CD4-positive, alpha-beta memory T cell (primary cell): ENCODE measurements at regions of chr11 and their contacts with region 1.

Region 1: DNA sequence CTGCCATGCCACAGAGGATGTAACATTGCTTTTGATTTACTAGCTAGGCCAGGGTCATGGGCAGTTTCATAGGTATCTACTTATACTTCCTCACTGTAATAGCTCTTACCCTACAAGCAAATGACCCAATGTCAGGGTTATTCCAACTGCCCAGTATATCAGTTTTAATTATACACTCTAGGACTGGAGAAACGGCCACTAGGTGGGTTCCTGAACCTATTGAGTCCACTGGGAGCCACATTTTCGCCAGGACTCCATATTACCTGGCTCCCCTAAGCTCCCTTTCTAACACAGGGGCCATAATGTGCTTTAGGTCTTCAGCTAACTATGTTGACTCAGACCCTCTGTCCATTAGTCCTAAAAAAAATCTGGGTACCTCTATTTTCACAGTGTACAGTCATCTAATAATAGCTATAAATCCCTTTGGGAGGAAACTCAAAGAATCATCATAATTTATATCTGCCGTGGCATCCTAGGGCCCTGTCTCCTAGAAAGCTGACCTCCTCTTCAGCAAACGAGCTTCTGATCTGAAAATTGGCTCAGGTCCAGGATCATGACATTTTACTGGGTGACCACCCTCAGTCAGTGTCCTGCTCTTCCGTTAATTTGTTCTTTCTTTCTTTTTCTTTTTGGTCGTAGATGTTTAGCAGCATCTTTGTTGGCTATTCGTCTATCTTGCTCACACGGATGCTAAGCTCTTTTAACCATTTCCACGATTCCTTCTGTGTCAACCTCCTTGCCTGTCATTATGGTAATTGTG is 244.3 kb downstream of the FAM76B start:
- DNase-seq: no peak
- H3K4me3 ChIP-seq: no peak overlapping the region
- H3K4me3 Mint-ChIP-seq: no peak overlapping the region
- H3K27ac ChIP-seq: no peak overlapping the region
- H3K27ac Mint-ChIP-seq: no peak overlapping the region
- H3K4me1 ChIP-seq: peaks cover 15% of the 10 kb centered on the region
- H3K4me1 Mint-ChIP-seq: peaks cover 3 to 13% (median 10%) of the 10 kb centered on the region in 4 donors
- H3K27me3 ChIP-seq: no peaks in the 10 kb centered on the region
- H3K27me3 Mint-ChIP-seq: no peaks in the 10 kb centered on the region

Region 2: DNA sequence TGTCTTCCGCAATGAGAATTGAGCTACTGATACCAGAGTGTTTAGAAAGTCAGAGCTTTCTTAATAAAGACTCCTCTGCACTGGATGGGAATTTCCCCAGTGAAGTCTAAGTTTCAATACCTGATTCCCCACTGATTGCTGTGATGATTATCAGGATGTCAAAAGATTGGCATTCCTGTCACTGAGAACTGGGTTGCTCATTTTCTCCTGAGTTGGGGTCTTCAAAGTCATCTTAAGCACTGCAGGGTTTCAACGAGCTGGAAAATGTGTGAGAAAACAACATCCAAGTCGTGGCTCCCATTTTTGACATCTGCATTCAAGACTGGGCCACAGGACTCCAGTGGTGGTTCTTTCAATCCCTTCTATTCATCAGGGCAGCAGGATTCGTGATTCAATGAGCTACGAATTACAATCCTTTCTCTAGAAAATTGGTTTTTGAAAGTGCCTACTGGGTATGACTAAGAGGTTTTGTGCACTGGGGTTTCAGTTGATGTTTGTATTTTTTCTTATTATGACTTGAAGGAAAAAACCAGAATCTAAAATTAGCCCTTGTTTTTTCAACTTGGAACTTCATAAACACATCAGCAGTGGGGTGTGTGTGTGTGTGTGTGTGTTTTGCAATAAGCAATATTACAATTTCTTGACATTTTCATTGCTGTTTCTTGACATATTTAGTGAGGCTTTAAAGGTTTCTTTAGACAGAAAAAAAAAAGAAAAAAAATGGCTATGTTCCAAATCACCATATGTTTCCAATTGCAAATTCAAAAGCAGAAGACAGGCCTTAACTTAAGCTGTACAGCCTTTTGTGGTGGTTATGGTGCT is 11.3 kb after region 1 on chr11:
- CTCF ChIA-PET with region 1: interaction called, 14 read pairs
- POLR2A ChIA-PET with region 1: no interaction called
- intact Hi-C with region 1: no loop called
- DNase-seq: no peak
- H3K4me3 ChIP-seq: no peak overlapping the region
- H3K4me3 Mint-ChIP-seq: no peak overlapping the region
- H3K27ac ChIP-seq: no peak overlapping the region
- H3K27ac Mint-ChIP-seq: no peak overlapping the region
- H3K4me1 ChIP-seq: no peaks in the 10 kb centered on the region
- H3K4me1 Mint-ChIP-seq: peaks cover 0 to 10% (median 2%) of the 10 kb centered on the region in 4 donors
- H3K27me3 ChIP-seq: no peaks in the 10 kb centered on the region
- H3K27me3 Mint-ChIP-seq: peaks cover 0 to 2% of the 10 kb centered on the region in 2 donors

Region 3: DNA sequence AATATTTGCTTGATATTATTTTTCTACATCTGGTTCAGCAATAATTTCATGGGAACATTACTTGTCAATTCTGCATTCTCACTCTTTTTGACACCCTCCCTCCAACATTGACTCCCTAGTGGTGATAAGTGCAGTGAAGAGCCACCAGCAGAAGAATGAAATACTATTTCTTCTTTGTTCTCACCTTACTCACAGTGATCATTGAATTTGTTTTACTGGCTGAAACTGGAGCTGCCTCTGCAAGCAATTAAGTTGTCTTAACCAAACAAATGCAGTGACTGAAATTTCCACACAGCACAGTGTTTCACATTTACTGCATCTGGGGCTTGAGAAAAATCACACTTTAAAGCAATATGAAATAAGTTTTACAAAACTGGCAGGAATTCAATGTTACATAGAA is 1034.4 kb after region 1 on chr11:
- CTCF ChIA-PET with region 1: no interaction called
- POLR2A ChIA-PET with region 1: no interaction called
- intact Hi-C with region 1: no loop called
- DNase-seq: no peak
- H3K4me3 ChIP-seq: no peak overlapping the region
- H3K4me3 Mint-ChIP-seq: no peak overlapping the region
- H3K27ac ChIP-seq: no peak overlapping the region
- H3K27ac Mint-ChIP-seq: no peak overlapping the region
- H3K4me1 ChIP-seq: no peaks in the 10 kb centered on the region
- H3K4me1 Mint-ChIP-seq: no peaks in the 10 kb centered on the region
- H3K27me3 ChIP-seq: no peaks in the 10 kb centered on the region
- H3K27me3 Mint-ChIP-seq: peaks cover 0 to 6% of the 10 kb centered on the region in 2 donors